Activated naive CD4-positive, alpha-beta T cell treated with anti-CD3 and anti-CD28 coated beads for 36 hours (primary cell): ENCODE measurements at regions of chr9 and their contacts with region 1.

Region 1: GRCh38 chr9:21559424-21560280 is 77.5 kb upstream of the IFNE start:
- DNase-seq: peak; percentile 61
- H3K4me3 Mint-ChIP-seq: peak overlapping the region; percentile 88
- H3K27ac Mint-ChIP-seq: peak overlapping the region; percentile 56
- H3K4me1 Mint-ChIP-seq: peaks cover 43% of the 10 kb centered on the region
- H3K27me3 Mint-ChIP-seq: no peaks in the 10 kb centered on the region

Region 2: GRCh38 chr9:21465859-21466518 is 93.7 kb before region 1 on chr9:
- CTCF ChIA-PET with region 1: interaction called, 5 read pairs
- intact Hi-C with region 1: loop called (anchors 5 kb)
- DNase-seq: no peak
- H3K4me3 Mint-ChIP-seq: no peak overlapping the region
- H3K27ac Mint-ChIP-seq: no peak overlapping the region
- H3K4me1 Mint-ChIP-seq: peaks cover 2% of the 10 kb centered on the region
- H3K27me3 Mint-ChIP-seq: no peaks in the 10 kb centered on the region

Region 3: DNA sequence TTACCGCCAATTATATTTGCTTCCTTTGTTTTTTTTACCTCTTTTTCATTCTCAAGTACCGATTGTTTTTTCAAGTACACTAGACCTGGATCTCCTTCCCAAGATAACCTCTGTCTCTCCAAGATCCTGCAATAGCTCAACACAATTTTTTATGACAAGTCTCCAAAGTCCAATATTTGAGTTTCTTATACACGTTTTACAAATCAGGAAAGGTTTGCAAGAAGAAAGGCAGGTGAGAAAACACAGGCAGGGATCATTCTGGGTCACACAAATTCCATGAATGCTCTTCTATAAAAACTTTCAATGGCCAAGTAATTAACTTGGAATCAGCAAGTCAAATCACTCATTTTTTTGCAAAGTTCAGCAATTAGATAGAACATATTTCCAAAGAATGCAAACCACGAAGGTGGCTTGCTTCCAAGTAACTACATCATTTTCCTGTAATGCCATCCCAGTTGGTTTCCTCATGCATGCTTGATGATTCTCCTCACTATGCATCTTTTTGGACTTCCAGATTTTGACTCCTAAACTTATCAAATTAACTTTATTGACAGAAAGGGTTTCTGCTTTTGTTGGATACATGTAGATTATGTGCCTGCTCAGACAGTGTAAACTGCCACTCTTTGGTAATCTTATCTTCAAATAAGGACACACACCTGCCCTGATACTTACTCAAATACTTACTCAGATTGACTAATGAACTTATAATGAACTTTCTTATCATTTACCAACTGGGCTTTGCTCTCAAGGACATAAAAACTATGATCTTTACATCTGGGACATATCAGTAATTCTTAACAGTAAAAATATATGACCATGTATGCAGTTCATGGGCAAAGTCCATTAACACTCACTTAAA is 52.8 kb before region 1 on chr9:
- CTCF ChIA-PET with region 1: no interaction called
- intact Hi-C with region 1: loop called (anchors 10 kb)
- DNase-seq: no peak
- H3K4me3 Mint-ChIP-seq: no peak overlapping the region
- H3K27ac Mint-ChIP-seq: no peak overlapping the region
- H3K4me1 Mint-ChIP-seq: peaks cover 12% of the 10 kb centered on the region
- H3K27me3 Mint-ChIP-seq: no peaks in the 10 kb centered on the region

Region 4: GRCh38 chr9:21591221-21592062 is 31.8 kb after region 1 on chr9:
- CTCF ChIA-PET with region 1: no interaction called
- intact Hi-C with region 1: loop called (anchors 2 kb)
- DNase-seq: peak; percentile 79
- H3K4me3 Mint-ChIP-seq: no peak overlapping the region
- H3K27ac Mint-ChIP-seq: no peak overlapping the region
- H3K4me1 Mint-ChIP-seq: peaks cover 16% of the 10 kb centered on the region
- H3K27me3 Mint-ChIP-seq: no peaks in the 10 kb centered on the region

Region 5: DNA sequence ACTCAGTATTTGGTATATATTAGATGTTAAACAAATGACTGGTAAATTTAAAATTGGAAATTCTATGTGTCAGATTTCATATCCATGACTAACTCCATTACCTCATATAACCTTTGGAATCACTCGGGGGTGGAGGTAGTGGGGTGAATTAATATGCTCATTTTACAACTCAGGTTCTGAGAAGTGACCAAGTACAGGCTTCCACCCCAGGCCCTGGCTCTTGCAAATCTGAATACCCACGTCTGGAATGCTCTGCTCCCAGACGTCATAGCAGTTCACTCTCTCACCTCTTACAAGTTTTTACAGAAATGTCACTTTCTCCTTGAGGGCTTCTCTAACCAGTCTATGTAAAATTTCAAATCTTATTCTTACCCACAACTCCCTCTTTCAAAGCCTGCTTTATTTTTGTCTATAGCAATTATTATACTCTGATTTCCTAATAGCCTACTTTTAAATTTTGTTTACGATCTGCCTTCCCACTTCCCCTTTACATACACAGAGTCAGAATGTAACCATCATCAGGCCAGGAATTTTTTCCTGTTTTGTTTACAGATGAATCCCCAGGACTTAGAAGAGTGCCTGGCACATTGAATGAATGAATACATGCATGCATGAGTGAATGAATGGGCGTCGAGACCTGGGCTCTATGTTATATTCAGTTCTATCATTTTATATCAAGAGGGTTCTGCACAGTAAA is 56.6 kb after region 1 on chr9:
- CTCF ChIA-PET with region 1: no interaction called
- intact Hi-C with region 1: loop called (anchors 10 kb)
- DNase-seq: no peak
- H3K4me3 Mint-ChIP-seq: no peak overlapping the region
- H3K27ac Mint-ChIP-seq: no peak overlapping the region
- H3K4me1 Mint-ChIP-seq: peaks cover 46% of the 10 kb centered on the region
- H3K27me3 Mint-ChIP-seq: no peaks in the 10 kb centered on the region

Region 6: GRCh38 chr9:21802195-21803000 is 242.7 kb after region 1 on chr9 and contains the start of gene MTAP:
- CTCF ChIA-PET with region 1: no interaction called
- intact Hi-C with region 1: loop called (anchors 5 kb)
- DNase-seq: peak; percentile 82
- H3K4me3 Mint-ChIP-seq: peak within 1 kb of the TSS; percentile 99
- H3K27ac Mint-ChIP-seq: peak within 1 kb of the TSS; percentile 97
- H3K4me1 Mint-ChIP-seq: peaks cover 41% of the 10 kb centered on the region
- H3K27me3 Mint-ChIP-seq: peaks cover 4% of the 10 kb centered on the region
- total RNA-seq, gene MTAP: 59.0 to 66.4 TPM

Region 7: DNA sequence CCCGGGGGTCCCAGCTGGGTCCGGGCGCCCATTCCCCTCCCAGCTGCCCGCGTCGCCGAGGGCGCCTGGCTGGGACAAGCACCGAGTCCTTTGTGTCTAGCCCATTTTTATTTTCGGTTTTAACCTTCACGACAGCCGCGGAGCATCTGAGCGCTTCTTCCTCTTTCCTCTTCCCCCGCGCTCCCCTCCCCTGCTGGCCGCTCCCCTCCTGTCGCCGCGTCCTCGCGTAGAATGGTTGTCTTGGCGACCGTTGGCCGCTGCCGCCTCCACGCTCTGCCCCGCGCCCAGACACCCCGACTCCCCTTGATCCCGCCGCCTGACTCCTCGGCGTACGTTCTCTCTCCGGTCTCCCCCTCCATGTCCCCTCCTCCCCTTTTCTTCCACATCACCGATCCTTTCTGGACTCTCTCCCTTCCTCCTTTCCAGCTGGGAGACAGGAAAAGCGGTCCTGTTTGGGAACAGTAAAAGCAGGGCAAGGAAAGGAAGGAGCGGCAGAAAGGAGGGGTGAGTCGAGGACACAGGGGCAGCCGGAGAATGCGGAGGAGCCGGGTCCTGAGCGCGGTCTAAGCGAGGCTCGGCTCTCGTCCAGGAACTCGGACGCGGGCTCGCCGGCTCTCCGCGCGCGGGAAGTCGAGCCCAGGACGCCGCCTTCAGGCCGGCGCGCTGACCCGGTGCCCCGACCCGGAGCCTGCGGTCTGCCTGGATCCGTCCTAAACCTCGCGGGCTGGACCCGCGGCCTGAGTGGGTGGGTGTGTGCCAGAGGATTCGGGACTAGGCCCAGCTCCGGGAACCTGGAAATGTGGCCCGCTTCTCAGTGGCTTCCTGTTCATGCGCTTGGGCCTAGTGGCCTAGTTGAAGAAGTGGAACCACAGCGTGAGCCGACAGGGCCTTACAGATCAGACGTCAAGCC is 435.8 kb after region 1 on chr9:
- CTCF ChIA-PET with region 1: no interaction called
- intact Hi-C with region 1: loop called (anchors 10 kb)
- DNase-seq: peak; percentile 77
- H3K4me3 Mint-ChIP-seq: peak overlapping the region; percentile 87
- H3K27ac Mint-ChIP-seq: peak overlapping the region; percentile 36
- H3K4me1 Mint-ChIP-seq: peaks cover 10% of the 10 kb centered on the region
- H3K27me3 Mint-ChIP-seq: peaks cover 42% of the 10 kb centered on the region